ENCODE measurements at regions of chr18 and their contacts with region 1.

Region 1: GRCh38 chr18:13003466-13003896 is 12.3 kb downstream of the CEP192 start:
- DNase-seq: peak in 1 of 2 donors; percentile 18
- ATAC-seq: peak; percentile 58 to 94 (median 81)
- H3K4me3 ChIP-seq: no peak overlapping the region
- H3K27ac ChIP-seq: no peak overlapping the region
- H3K4me1 ChIP-seq: peaks cover 0 to 9% (median 4%) of the 10 kb centered on the region in 9 donors
- H3K27me3 ChIP-seq: no peaks in the 10 kb centered on the region
- CTCF ChIP-seq: peak; percentile 13 to 64 (median 46)

Region 2: DNA sequence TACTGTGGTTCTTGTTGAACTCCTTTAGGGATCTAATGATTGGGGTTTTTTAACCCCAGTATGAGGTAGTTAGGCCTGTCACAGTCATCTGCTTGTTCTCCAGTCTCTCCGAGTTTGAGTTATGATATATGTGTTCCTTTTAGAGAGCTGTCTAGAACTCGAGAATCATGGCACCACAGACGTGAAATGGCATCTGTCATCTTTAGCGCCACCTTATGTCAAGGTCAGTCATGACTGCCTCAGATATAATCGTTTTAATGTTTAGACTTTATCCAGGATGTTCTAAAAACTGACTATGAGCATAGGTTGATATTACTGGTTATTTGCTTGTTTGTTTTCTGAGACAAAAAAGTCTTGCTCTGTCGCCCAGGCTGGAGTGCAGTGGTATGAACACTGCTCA is 99.9 kb after region 1 on chr18:
- intact Hi-C with region 1: loop called in 2 of 10 experiments (anchors 10 kb)
- DNase-seq: no peak
- ATAC-seq: no peak
- H3K4me3 ChIP-seq: no peak overlapping the region
- H3K27ac ChIP-seq: no peak overlapping the region
- H3K4me1 ChIP-seq: peaks cover 0 to 13% (median 4%) of the 10 kb centered on the region in 9 donors
- H3K27me3 ChIP-seq: no peaks in the 10 kb centered on the region
- CTCF ChIP-seq: peak in 4 of 9 donors; percentile 9 to 28 (median 20)